Activated naive CD4-positive, alpha-beta T cell treated with anti-CD3 and anti-CD28 coated beads for 36 hours (primary cell): ENCODE measurements at regions of chr1 and their contacts with region 1.

Region 1: DNA sequence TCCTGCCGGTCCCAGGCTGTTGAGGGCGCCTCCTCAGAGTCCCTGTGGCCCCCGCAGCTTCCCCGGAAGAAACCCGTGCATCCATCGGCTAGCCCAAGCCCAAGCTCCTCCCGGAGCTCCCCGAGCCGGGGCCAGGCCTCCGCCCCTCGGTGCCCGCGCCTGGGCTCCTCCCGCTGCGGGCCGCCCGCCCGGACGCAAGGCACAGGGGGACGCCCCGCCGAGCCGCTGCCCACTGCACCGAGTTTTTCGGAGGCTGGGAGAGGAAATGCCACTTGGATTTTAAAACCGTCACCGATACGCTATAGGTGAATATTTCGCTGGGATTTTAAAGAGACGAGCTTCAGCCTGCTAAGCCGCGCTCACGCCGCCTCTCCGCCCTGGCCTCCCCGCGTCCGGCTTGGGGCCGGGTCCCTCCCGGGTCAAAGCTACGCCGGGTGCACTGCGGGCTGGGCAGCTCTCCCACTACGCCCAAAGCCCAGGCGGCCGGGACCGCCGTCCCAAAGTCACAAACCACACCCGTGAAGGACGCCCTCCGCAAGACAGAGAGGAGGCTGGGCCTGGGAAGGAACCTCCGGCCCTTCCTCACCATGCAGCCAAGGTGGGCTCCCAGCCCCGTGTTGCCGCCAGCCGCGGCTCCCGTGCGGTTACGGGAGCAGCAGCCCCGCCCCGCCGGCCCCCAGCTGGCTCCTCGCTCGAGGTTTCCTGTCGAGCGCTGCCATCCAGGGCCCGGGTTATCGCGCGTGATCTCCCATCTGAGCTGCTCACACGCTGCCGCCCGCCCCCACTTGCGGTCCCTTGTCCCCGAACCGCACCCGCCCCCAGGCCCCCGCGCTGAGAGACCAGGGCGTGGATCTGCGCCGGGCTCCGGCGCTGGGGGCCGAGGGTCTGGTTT is 63.2 kb downstream of the CD247 start:
- DNase-seq: peak; percentile 83
- H3K4me3 Mint-ChIP-seq: peak overlapping the region; percentile 79
- H3K27ac Mint-ChIP-seq: peak overlapping the region; percentile 87
- H3K4me1 Mint-ChIP-seq: peaks cover 67% of the 10 kb centered on the region
- H3K27me3 Mint-ChIP-seq: no peaks in the 10 kb centered on the region

Region 2: GRCh38 chr1:167474191-167474716 is 19.1 kb after region 1 on chr1:
- CTCF ChIA-PET with region 1: interaction called, 9 read pairs
- intact Hi-C with region 1: loop called (anchors 2 kb)
- DNase-seq: peak; percentile 48
- H3K4me3 Mint-ChIP-seq: peak overlapping the region; percentile 63
- H3K27ac Mint-ChIP-seq: peak overlapping the region; percentile 79
- H3K4me1 Mint-ChIP-seq: peaks cover 85% of the 10 kb centered on the region
- H3K27me3 Mint-ChIP-seq: no peaks in the 10 kb centered on the region

Region 3: DNA sequence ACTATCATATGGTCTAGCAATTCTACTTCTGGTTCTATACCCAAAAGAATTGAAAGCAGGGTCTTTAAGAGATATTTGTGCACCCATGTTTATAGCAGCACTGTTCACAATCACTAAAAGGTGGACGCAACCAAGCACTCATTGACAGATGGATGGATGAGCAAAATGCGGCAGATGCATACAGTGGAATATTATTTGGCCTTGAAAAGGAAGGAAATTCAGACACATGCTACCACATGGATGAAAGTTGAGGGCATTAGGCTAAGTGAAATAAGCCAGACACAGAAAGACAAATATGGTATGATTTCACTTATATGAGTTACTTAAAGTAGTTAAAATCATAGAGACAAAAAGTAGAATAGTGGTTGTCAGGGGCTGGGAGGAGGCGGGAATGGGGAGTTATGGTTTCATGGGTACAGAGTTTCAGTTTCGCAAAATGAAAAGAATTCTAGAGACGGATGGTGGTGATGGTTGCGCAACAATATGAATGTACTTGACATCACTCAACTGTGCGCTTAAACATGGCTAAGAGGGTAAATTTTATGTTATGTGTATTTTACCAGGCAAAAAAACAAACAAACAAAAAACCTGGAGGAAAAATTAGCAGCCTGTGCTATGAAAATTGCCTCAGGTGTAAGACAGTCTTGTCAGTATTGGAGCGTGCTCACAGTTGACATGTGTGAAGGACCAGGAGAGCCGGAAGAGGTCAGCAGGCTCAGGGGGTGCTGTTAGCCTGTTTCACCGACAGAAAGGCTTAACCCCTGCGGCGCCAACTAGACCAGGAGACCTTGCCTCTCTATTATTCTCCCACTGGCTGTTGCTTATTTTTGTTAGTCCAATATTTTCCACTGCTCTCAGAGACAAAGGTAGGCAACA is 36.7 kb after region 1 on chr1:
- CTCF ChIA-PET with region 1: interaction called, 4 read pairs
- intact Hi-C with region 1: loop called (anchors 1 kb)
- DNase-seq: peak; percentile 60
- H3K4me3 Mint-ChIP-seq: peak overlapping the region; percentile 69
- H3K27ac Mint-ChIP-seq: peak overlapping the region; percentile 92
- H3K4me1 Mint-ChIP-seq: peaks cover 94% of the 10 kb centered on the region
- H3K27me3 Mint-ChIP-seq: no peaks in the 10 kb centered on the region

Region 4: GRCh38 chr1:167499664-167500101 is 44.5 kb after region 1 on chr1:
- CTCF ChIA-PET with region 1: interaction called, 4 read pairs
- intact Hi-C with region 1: loop called (anchors 1 kb)
- DNase-seq: peak; percentile 59
- H3K4me3 Mint-ChIP-seq: peak overlapping the region; percentile 10
- H3K27ac Mint-ChIP-seq: peak overlapping the region; percentile 87
- H3K4me1 Mint-ChIP-seq: peaks cover 97% of the 10 kb centered on the region
- H3K27me3 Mint-ChIP-seq: no peaks in the 10 kb centered on the region